ENCODE measurements at regions of chr6 and their contacts with region 1.

Region 1: DNA sequence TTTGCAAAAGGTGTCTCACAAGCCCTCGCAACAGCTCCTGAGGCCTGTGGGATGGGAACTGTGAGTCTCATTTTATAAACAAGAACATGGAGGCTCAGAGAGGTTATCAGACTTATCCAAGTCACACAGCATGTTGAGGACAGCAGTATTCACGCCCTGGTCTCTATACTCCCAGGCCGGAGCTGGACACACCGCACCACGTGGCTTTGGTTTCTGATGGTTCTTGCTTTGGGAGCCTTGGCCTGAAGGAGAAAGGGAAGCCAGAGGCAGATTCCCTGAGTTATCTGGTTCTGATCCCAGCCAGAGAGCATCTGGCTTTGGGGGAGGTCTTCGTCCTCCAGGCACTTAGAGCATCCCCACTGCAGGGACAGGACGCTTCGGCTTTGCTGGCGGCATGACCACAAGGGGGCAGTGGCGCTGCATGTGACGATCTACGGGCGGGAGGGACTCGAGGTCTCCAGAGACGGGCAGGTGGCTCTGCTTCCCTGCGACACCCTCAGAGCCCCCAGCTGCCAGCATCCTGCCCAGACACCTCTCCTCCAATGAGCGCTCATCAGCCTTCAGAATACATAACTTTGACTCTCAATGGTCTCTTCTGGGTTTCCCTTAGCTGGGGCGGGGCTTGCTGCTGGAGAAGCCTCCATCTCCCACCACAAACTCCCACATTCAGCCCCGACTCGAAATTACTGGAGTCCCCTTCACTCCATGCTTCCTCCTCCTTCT is 51.4 kb upstream of the SAYSD1 start:
- DNase-seq: peak; percentile 73
- H3K4me3 ChIP-seq: no peak overlapping the region
- H3K27ac ChIP-seq: no peak overlapping the region
- H3K4me1 ChIP-seq: no peaks in the 10 kb centered on the region
- CTCF ChIP-seq: peak; percentile 85

Region 2: DNA sequence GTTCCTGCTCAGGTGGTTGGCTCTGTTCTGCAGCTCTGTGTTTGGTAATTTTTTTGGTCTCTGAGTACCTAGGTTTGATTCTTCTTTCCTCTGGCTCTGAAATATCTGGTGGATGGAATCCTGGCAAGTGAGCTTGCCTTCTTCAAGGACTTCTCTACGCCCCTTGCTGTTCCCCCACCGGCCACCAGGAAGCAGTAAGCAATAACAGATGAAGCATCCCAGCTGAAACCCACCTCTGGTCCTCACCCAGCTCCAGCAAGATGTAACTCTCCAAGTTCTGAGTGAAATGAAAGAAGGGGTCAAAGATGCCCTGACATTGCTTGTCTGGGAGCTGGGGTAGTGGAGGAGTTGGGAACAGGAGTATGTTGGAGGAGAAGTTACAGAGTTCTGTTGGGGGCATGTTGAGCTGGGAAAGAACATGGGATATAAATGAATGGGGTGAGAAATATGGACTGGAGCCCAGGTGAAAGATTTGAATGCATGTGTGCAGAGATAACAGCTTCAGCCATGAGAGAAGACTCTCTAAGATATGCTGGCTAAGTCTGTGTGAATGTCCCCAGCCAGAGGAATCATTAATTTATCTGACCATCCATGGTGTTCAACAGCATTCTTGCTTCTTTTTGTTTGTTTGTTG is 169.1 kb before region 1 on chr6:
- CTCF ChIA-PET with region 1: no interaction called
- POLR2A ChIA-PET with region 1: no interaction called
- intact Hi-C with region 1: loop called (anchors 10 kb)
- DNase-seq: peak; percentile 26
- H3K4me3 ChIP-seq: no peak overlapping the region
- H3K27ac ChIP-seq: no peak overlapping the region
- H3K4me1 ChIP-seq: no peaks in the 10 kb centered on the region
- CTCF ChIP-seq: peak; percentile 78